Tibial artery (tissue), 4 donors: ENCODE measurements at regions of chr3 and their contacts with region 1.

Region 1: GRCh38 chr3:10224784-10225665 is 23.2 kb upstream of the TATDN2 start:
- DNase-seq: peak; percentile 78 to 86
- H3K4me3 ChIP-seq: no peak overlapping the region
- H3K27ac ChIP-seq: no peak overlapping the region
- H3K4me1 ChIP-seq: peaks cover 0 to 6% (median 4%) of the 10 kb centered on the region in 4 donors
- H3K27me3 ChIP-seq: no peaks in the 10 kb centered on the region
- CTCF ChIP-seq: peak; percentile 81 to 89

Region 2: GRCh38 chr3:9951962-9952805 is 272.8 kb before region 1 on chr3 and contains the start of gene PRRT3:
- intact Hi-C with region 1: loop called (anchors 10 kb)
- DNase-seq: no peak
- H3K4me3 ChIP-seq: peak within 1 kb of the TSS; percentile 57 to 59
- H3K27ac ChIP-seq: peak within 1 kb of the TSS in 1 of 2 donors; percentile 18
- H3K4me1 ChIP-seq: peaks cover 0 to 21% (median 19%) of the 10 kb centered on the region in 4 donors
- H3K27me3 ChIP-seq: no peaks in the 10 kb centered on the region
- CTCF ChIP-seq: no peak

Region 3: GRCh38 chr3:10164546-10165393 is 60.3 kb before region 1 on chr3 and contains the start of gene IRAK2:
- intact Hi-C with region 1: loop called (anchors 2 kb)
- DNase-seq: peak; percentile 68 to 88
- H3K4me3 ChIP-seq: peak within 1 kb of the TSS; percentile 82 to 95
- H3K27ac ChIP-seq: peak within 1 kb of the TSS; percentile 89 to 90
- H3K4me1 ChIP-seq: peaks cover 0 to 14% (median 6%) of the 10 kb centered on the region in 4 donors
- H3K27me3 ChIP-seq: no peaks in the 10 kb centered on the region
- CTCF ChIP-seq: peak; percentile 85 to 99